ENCODE measurements at regions of chr19 and their contacts with region 1.

Region 1: DNA sequence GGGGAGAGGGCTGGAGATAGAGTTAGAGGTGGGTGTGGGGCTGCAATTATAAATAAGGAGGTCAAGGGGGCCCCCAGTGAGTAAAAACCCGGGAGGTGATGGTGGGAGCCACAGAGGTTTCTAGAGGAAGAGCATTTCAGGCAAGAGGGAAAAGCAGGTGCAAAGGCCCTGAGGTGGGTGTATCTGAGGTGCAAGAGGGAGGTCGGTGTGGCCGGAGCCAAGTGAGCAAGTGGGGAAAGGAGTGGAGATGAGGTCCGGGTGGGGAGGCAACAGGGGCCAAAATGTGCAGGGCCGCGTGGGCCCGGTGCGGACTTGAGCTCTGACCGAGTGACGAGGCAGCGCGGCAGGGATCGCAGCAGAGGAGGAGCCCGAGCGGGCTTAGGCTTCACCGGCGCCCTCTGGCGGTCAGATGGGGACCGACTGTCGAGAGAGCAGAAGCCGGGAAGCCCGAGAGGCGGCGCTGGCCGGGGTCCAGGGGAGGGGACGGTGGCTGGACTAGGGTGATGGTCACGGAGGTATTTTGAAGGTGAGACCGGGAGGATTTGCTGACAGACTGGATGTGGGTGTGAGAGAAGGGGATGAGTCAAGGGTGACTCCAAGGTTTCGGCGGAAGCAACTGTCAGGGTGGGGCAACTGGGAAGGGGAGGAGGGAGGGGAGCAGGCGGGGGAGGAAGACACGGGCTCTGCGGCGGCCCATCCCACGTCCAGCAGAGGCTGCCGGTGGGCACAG is 17.7 kb upstream of the SPACA4 start:
- DNase-seq: peak; percentile 90

Region 2: GRCh38 chr19:48489608-48490216 is 99.1 kb before region 1 on chr19:
- CTCF ChIA-PET with region 1: interaction called, 14 read pairs
- POLR2A ChIA-PET with region 1: interaction called, 3 read pairs
- DNase-seq: peak; percentile 77

Region 3: GRCh38 chr19:48506138-48506733 is 82.6 kb before region 1 on chr19:
- CTCF ChIA-PET with region 1: interaction called, 52 read pairs
- POLR2A ChIA-PET with region 1: interaction called, 9 read pairs
- DNase-seq: no peak

Measured in HEK293T (cell line).